Breast epithelium (tissue), 4 donors: ENCODE measurements at regions of chr17 and their contacts with region 1.

Region 1: DNA sequence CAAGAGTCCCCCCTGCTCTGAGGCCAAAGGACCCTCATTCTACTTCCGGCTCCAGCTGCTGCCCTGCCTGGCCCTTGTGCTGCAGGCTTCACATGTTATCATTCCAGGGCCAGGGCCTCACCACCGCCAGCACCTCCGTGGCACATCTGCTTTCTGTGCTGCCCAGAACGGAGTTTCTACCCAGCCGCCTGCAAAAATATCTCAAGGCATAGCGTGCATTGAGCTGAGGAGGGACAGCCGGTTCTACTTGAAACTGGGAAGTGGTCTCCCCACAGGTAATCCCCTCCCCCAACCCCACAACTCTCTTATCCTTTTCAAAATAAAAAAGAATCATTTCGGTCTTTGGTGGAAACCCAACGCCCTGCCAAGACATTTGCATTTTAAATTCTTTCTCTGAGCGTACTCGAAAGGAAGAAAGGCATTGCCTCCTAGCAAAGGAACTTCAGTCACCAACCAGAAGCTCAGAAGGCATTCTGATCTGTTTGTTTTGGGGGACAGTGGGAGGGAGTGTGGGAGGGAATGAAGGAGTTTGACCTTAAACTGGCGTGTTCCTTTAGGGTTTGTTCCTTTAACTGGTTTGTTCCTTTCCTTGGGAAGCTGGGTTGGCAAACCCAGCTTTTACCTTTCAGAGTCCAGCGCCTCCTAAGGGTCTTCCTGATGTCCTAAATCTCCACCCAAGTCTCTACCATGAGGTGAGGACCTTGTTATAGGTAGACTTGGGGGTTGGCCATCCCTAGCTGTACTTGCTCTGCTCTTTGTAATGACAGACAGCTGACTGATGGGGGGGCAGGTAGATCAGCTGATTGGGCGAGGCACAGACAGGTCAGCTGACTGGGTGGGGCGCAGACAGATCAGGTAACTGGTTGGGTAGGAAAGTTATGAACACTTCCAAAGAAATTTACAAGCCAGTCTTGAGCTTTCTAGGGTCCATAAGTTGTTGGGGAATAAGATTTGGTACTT is 33.4 kb upstream of the PIK3R6 start:
- DNase-seq: no peak
- H3K4me3 ChIP-seq: no peak overlapping the region
- H3K27ac ChIP-seq: no peak overlapping the region
- H3K4me1 ChIP-seq: no peaks in the 10 kb centered on the region
- H3K27me3 ChIP-seq: no peaks in the 10 kb centered on the region
- CTCF ChIP-seq: no peak
- POLR2A ChIP-seq: no peak

Region 2: DNA sequence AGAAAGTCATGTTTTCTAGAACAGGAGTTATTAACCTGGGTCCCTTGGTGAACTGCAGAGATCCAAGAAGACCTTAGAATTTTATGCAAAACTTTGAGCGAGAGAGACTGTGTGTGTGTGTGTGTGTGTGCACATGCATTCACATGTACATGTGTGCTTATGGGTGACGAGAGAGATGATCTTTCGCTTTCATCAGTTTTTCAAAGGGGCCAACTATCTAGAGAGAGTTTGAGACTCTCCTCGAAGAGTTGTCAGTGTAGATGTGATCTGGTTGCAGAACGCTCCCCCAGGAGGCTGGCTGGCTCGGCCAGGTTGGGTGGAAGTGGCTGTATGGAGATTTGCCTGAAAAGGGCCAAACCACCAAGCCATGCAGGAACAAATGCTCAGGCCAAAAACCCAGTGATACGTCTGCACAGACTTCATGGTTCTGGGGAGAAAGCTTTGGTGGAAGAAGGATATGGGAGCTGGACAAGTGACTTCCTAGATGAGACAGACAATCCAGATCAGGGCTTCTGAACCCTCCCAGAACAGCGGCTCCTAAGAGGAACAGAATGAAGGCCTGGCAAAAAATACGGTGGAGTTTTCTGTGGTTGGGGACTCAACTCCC is 58.5 kb after region 1 on chr17:
- intact Hi-C with region 1: loop called (anchors 2 kb)
- DNase-seq: no peak
- H3K4me3 ChIP-seq: no peak overlapping the region
- H3K27ac ChIP-seq: no peak overlapping the region
- H3K4me1 ChIP-seq: no peaks in the 10 kb centered on the region
- H3K27me3 ChIP-seq: peaks cover 0 to 4% of the 10 kb centered on the region in 2 donors
- CTCF ChIP-seq: no peak
- POLR2A ChIP-seq: no peak